CD4-positive, alpha-beta memory T cell (primary cell): ENCODE measurements at regions of chr7 and their contacts with region 1.

Region 1: GRCh38 chr7:8125680-8126444 is 136.1 kb downstream of the ICA1 start:
- DNase-seq: peak; percentile 80 to 92 (median 84)
- H3K4me3 ChIP-seq: peak overlapping the region in 1 of 2 donors; percentile 12
- H3K4me3 Mint-ChIP-seq: peak overlapping the region; percentile 46 to 89 (median 78)
- H3K27ac ChIP-seq: peak overlapping the region; percentile 73
- H3K27ac Mint-ChIP-seq: peak overlapping the region; percentile 93 to 100 (median 98)
- H3K4me1 ChIP-seq: peaks cover 94% of the 10 kb centered on the region
- H3K4me1 Mint-ChIP-seq: peaks cover 62 to 94% (median 79%) of the 10 kb centered on the region in 4 donors
- H3K27me3 ChIP-seq: no peaks in the 10 kb centered on the region
- H3K27me3 Mint-ChIP-seq: no peaks in the 10 kb centered on the region

Region 2: DNA sequence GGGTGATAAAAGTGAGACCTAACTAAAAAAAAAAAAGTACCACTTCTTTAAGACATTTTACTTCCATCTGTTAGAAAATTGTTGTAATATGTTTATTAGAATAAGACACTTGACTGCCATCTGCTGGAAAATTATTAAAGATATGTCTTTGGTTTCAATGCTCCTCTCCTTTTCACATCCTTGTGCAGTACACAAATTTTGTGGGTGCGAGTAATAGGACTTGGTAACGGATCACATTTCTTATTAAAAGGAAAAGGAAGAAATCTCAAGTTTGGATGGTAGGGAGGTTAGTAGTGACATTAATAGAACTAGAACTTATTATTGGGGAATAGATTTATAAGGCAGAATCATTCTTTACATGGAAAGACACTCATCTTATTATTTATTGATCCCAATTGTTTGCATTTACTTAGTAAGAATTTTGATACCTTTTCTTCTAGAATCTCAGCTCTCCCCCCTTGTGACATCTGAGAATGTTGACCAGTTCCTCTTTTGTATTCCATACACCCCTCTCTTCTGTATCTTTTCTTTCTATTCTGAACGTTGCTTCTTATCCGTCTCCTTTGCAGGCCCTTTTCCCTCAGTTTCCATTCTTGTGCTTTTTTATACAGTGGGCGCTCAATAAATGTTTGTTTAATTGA is 364.4 kb before region 1 on chr7:
- CTCF ChIA-PET with region 1: no interaction called
- POLR2A ChIA-PET with region 1: interaction called, 6 read pairs
- intact Hi-C with region 1: loop called (anchors 5 kb)
- DNase-seq: peak in 4 of 5 donors; percentile 46 to 56 (median 49)
- H3K4me3 ChIP-seq: peak overlapping the region; percentile 4 to 75
- H3K4me3 Mint-ChIP-seq: peak overlapping the region; percentile 81 to 98 (median 92)
- H3K27ac ChIP-seq: peak overlapping the region; percentile 67
- H3K27ac Mint-ChIP-seq: peak overlapping the region; percentile 89 to 98 (median 95)
- H3K4me1 ChIP-seq: peaks cover 35% of the 10 kb centered on the region
- H3K4me1 Mint-ChIP-seq: peaks cover 35 to 40% (median 39%) of the 10 kb centered on the region in 4 donors
- H3K27me3 ChIP-seq: no peaks in the 10 kb centered on the region
- H3K27me3 Mint-ChIP-seq: no peaks in the 10 kb centered on the region

Region 3: DNA sequence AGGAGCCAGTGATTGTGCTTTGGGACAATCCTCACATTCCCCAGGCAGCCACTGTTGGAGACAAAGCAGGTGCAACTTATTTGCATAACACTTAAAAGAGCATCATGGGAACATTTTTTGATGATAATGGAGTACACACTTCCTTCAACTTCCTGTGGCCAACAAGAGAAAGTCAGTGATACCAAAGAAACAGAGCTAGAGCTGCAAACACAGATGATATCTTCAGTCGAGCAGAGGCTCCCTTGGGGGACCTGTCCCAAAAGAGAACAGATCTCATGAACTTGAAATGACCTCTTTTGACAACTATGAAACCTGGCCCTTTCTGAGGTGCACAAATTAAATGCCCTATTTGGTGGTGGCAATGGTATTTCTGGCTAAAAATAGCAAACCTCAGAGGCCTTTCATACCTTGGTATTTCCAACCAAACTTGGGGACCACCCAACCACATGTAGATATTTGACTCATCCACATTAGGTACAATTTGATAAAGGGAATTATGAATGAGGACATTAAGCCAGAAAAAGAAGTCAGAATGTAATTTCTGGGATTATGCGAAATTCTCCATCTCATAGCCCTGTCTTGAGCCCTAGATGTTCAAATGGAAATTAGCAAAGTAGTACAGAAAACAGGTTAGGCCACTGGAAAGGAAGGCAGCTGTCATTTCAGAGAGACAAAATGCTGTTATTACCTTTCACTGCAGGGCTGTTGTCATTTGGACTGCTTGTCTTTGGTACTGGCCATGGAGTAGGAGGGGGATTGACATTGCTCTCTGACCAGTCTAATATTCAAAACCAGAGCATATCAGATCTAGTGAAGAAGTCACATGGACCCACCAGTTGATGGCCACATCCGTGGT is 10.1 kb before region 1 on chr7:
- CTCF ChIA-PET with region 1: interaction called, 10 read pairs
- POLR2A ChIA-PET with region 1: interaction called, 101 read pairs
- intact Hi-C with region 1: loop called (anchors 1 kb)
- DNase-seq: peak in 2 of 5 donors; percentile 30 to 38
- H3K4me3 ChIP-seq: no peak overlapping the region
- H3K4me3 Mint-ChIP-seq: peak overlapping the region in 6 of 8 donors; percentile 5 to 62 (median 48)
- H3K27ac ChIP-seq: no peak overlapping the region
- H3K27ac Mint-ChIP-seq: peak overlapping the region; percentile 75 to 97 (median 84)
- H3K4me1 ChIP-seq: peaks cover 60% of the 10 kb centered on the region
- H3K4me1 Mint-ChIP-seq: peaks cover 37 to 61% (median 45%) of the 10 kb centered on the region in 4 donors
- H3K27me3 ChIP-seq: no peaks in the 10 kb centered on the region
- H3K27me3 Mint-ChIP-seq: no peaks in the 10 kb centered on the region

Region 4: DNA sequence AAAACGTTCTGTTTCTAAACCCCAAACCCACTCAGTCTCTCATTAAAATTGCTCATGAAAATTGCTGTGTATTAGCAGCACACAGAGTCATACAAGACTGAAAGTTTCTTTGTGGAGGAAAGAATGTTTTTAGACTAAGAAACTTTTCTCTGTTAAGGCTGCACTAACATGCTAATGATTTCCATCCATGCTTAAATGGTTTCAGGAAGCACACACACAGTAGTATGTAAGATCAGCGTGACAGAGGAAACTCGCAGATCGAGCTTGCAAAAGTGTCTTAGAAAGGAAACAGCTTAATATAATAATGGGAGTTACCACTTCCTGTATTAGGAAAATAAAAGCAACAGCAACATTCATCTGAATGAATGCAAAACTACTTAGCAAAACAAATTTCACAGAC is 23.4 kb after region 1 on chr7:
- CTCF ChIA-PET with region 1: interaction called, 14 read pairs
- POLR2A ChIA-PET with region 1: interaction called, 74 read pairs
- intact Hi-C with region 1: loop called (anchors 1 kb)
- DNase-seq: no peak
- H3K4me3 ChIP-seq: no peak overlapping the region
- H3K4me3 Mint-ChIP-seq: peak overlapping the region; percentile 19 to 73 (median 55)
- H3K27ac ChIP-seq: peak overlapping the region; percentile 13
- H3K27ac Mint-ChIP-seq: peak overlapping the region; percentile 58 to 92 (median 84)
- H3K4me1 ChIP-seq: peaks cover 57% of the 10 kb centered on the region
- H3K4me1 Mint-ChIP-seq: peaks cover 45 to 75% (median 62%) of the 10 kb centered on the region in 4 donors
- H3K27me3 ChIP-seq: no peaks in the 10 kb centered on the region
- H3K27me3 Mint-ChIP-seq: no peaks in the 10 kb centered on the region

Region 5: GRCh38 chr7:8176370-8177081 is 50.7 kb after region 1 on chr7:
- CTCF ChIA-PET with region 1: interaction called, 10 read pairs
- POLR2A ChIA-PET with region 1: interaction called, 3 read pairs
- intact Hi-C with region 1: loop called (anchors 1 kb)
- DNase-seq: peak; percentile 64 to 83 (median 69)
- H3K4me3 ChIP-seq: peak overlapping the region in 1 of 2 donors; percentile 34
- H3K4me3 Mint-ChIP-seq: peak overlapping the region; percentile 71 to 87 (median 80)
- H3K27ac ChIP-seq: peak overlapping the region; percentile 69
- H3K27ac Mint-ChIP-seq: peak overlapping the region; percentile 91 to 98 (median 97)
- H3K4me1 ChIP-seq: peaks cover 53% of the 10 kb centered on the region
- H3K4me1 Mint-ChIP-seq: peaks cover 45 to 65% (median 54%) of the 10 kb centered on the region in 4 donors
- H3K27me3 ChIP-seq: no peaks in the 10 kb centered on the region
- H3K27me3 Mint-ChIP-seq: no peaks in the 10 kb centered on the region